ENCODE measurements at regions of chr6 and their contacts with region 1.

Region 1: DNA sequence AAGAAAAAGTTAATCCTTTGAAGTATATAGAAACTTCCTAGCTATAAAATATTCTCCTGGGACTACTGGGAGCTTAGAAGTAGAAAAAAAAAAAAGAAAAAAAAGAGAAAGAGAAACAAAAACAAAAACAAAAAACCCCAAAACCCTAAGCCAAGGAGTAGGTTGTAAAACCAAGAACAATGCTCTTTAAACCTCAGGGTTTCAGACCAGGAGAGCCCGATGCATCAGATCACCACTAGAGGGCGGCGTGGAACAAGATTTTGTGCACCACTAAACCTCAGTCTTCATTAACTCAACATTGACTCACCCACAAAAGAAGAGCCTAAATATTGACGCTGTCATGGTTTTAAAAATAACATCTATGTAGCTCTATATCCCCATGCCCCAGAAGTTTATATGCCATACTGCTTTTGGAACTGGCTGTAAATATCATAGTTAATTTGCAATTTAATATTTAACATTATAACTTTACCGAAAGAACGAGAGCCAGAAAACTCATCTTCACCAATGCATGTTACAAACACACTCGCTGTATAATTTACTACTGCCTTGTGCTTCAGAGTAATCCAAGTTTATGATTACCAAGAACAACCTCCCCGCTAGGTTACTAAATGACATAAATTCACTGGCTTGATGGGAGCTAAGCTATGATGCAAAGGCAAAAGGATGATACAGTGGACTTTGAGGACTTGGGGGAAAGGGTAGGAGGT is 19.2 kb downstream of the MCUR1 start:
- DNase-seq: peak; percentile 73
- H3K4me3 ChIP-seq: no peak overlapping the region
- H3K27ac ChIP-seq: peak overlapping the region; percentile 53
- H3K4me1 ChIP-seq: peaks cover 5% of the 10 kb centered on the region
- H3K27me3 ChIP-seq: no peaks in the 10 kb centered on the region
- CTCF ChIP-seq: peak; percentile 94 to 97

Region 2: DNA sequence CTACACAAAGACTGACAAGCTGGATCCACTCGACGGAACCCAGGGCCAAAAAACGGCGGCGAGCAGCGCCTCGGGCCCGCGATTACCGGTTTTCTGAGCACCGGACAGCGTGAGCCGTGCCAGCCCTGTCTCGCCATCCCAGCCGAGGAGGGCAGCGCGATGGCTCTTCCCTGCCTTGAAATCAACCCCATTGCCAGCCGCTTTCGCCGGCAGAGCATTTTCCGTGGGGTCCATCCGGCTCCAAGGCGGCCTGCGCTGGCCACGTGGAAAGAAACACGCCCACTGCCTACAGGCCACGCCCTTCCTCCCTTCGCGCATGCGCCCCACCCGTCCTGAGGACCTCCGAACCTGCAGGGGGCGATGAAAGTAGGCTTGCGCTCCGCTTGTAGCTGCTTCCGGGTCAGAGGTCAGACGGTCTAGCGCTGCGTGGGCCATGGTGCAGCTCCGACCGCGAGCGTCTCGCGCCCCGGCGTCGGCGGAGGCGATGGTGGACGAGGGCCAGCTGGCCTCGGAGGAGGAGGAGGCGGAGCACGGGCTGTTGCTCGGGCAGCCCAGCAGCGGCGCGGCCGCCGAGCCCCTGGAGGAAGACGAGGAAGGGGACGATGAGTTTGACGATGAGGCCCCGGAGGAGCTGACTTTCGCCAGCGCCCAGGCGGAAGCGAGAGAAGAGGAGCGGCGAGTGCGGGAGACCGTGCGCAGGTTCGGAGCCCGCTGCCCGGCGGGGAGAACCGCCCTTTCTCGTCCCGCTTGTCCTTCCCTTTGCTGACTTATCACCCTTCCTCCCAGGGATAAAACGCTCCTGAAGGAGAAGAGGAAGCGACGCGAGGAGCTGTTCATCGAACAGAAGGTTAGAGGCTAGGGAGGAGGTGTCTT is 180.0 kb before region 1 on chr6 and contains the start of gene NOL7:
- CTCF ChIA-PET with region 1: no interaction called
- dilution Hi-C with region 1: no loop called
- in situ Hi-C with region 1: no loop called
- intact Hi-C with region 1: loop called (anchors 10 kb)
- DNase-seq: peak; percentile 95
- H3K4me3 ChIP-seq: peak within 1 kb of the TSS; percentile 66 to 85 (median 81)
- H3K27ac ChIP-seq: peak within 1 kb of the TSS; percentile 77
- H3K4me1 ChIP-seq: peaks cover 10% of the 10 kb centered on the region
- H3K27me3 ChIP-seq: no peaks in the 10 kb centered on the region
- CTCF ChIP-seq: peak; percentile 95
- total RNA-seq, gene NOL7: 20.3 to 70.0 TPM

Region 3: DNA sequence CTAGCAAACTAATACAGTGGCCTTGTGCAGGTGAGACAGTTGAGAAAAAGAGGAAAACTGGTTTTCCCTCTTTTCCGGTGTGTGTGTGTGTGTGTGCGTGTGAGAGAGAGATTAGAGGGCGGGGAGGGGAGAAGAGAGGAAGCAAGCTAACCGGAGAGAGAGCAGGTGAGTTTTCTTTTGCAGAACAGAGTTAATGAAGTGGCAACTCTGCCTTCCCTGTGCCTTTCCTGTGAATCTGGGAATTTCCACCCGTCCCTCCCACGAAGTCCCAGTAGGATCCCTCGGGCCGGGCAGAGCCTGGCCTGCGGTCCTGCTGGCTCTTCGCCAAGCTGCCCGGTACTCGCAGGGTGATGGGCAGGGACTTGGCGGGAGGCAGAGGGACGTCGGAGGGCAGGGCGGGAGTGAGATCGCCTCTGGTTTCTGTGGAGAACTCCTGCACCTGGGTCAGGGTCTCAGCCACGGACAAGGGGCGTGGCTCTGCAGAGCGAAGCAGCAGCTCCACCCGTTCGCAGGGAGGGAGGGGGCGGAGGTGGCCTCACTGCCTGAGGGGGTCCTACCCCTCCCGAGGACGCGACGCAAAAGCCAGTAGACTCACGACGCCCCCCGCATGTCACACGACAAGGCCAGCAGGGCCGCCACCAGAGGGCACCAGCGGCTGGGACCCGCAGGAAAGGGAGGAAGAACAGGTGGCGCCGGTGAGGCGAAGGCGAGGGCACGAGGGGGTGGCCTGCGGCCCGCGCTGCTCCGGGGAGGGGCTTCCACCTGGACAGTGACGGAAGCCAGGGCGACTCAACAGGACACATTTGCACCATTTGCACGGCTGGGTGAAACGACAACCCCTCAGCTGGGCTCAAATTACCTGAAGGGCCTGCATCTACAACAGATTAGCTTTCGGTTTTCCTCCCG is 78.3 kb after region 1 on chr6:
- CTCF ChIA-PET with region 1: no interaction called
- dilution Hi-C with region 1: loop called (anchors 5 kb)
- in situ Hi-C with region 1: no loop called
- intact Hi-C with region 1: loop called (anchors 5 kb)
- DNase-seq: peak; percentile 33
- H3K4me3 ChIP-seq: peak overlapping the region; percentile 52 to 53 (median 53)
- H3K27ac ChIP-seq: no peak overlapping the region
- H3K4me1 ChIP-seq: peaks cover 17% of the 10 kb centered on the region
- H3K27me3 ChIP-seq: no peaks in the 10 kb centered on the region
- CTCF ChIP-seq: peak; percentile 63 to 88

Region 4: DNA sequence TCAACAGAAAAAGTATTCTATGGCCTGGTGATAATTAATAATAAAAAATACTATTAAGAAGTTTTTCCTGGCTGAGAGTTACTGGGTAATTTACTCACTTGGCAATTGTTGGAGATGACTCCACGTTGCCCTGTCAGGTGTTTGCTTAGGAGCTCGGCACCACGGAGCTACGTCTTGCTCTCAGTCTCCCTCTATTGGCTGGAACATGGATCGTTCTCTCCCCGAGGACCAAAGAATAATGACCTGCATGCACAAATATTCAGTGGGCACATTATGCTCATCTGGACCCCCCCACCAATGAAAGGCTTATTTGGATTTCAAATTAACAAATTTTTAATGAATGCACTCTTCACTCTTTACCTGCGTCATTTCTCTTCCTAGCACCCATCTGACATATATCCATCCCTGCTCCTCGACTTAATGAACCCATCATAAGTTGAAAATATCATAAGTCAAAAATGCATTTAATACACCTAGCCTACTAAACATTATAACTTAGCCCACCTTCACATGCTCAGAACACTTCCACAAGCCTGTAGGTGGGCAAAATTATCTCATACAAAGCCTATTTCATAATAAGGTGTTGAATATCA is 251.4 kb after region 1 on chr6:
- CTCF ChIA-PET with region 1: no interaction called
- dilution Hi-C with region 1: no loop called
- in situ Hi-C with region 1: no loop called
- intact Hi-C with region 1: loop called (anchors 5 kb)
- DNase-seq: peak; percentile 39
- H3K4me3 ChIP-seq: no peak overlapping the region
- H3K27ac ChIP-seq: no peak overlapping the region
- H3K4me1 ChIP-seq: no peaks in the 10 kb centered on the region
- H3K27me3 ChIP-seq: no peaks in the 10 kb centered on the region
- CTCF ChIP-seq: peak; percentile 88 to 91

Region 5: DNA sequence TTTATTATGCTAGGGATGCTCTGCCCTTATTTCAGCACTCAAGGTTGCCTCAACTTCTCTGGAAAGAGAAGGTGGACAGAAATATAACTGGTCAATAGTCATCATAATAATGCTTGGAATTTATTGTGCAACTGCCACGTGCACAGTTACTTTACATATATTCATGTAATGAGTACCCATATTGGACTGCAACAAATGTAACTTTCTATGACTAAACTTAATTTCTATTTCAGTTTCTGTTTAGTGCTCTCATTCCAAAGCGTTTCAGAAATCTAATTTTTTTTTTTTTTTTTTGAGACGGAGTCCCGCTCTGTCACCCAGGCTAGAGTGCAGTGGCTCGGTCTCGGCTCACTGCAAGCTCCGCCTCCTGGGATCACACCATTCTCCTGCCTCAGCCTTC is 294.0 kb after region 1 on chr6:
- CTCF ChIA-PET with region 1: no interaction called
- dilution Hi-C with region 1: no loop called
- in situ Hi-C with region 1: no loop called
- intact Hi-C with region 1: no loop called
- DNase-seq: no peak
- H3K4me3 ChIP-seq: no peak overlapping the region
- H3K27ac ChIP-seq: no peak overlapping the region
- H3K4me1 ChIP-seq: no peaks in the 10 kb centered on the region
- H3K27me3 ChIP-seq: no peaks in the 10 kb centered on the region
- CTCF ChIP-seq: no peak

Region 6: GRCh38 chr6:14144678-14145113 is 349.5 kb after region 1 on chr6:
- CTCF ChIA-PET with region 1: no interaction called
- dilution Hi-C with region 1: no loop called
- in situ Hi-C with region 1: no loop called
- intact Hi-C with region 1: loop called (anchors 1 kb)
- DNase-seq: peak; percentile 30
- H3K4me3 ChIP-seq: no peak overlapping the region
- H3K27ac ChIP-seq: no peak overlapping the region
- H3K4me1 ChIP-seq: no peaks in the 10 kb centered on the region
- H3K27me3 ChIP-seq: no peaks in the 10 kb centered on the region
- CTCF ChIP-seq: peak; percentile 92 to 99

Measured in mammary epithelial cell (primary cell).